ENCODE measurements at regions of chr17 and their contacts with region 1.

Region 1: GRCh38 chr17:50689251-50689650 is 18.5 kb downstream of the ANKRD40 start:
- DNase-seq: no peak
- ATAC-seq: no peak
- H3K4me3 ChIP-seq: no peak overlapping the region
- H3K27ac ChIP-seq: peak overlapping the region in 1 of 3 donors; percentile 24
- H3K4me1 ChIP-seq: peaks cover 5 to 93% (median 53%) of the 10 kb centered on the region in 4 donors
- H3K27me3 ChIP-seq: no peaks in the 10 kb centered on the region
- CTCF ChIP-seq: no peak
- POLR2A ChIP-seq: no peak

Region 2: DNA sequence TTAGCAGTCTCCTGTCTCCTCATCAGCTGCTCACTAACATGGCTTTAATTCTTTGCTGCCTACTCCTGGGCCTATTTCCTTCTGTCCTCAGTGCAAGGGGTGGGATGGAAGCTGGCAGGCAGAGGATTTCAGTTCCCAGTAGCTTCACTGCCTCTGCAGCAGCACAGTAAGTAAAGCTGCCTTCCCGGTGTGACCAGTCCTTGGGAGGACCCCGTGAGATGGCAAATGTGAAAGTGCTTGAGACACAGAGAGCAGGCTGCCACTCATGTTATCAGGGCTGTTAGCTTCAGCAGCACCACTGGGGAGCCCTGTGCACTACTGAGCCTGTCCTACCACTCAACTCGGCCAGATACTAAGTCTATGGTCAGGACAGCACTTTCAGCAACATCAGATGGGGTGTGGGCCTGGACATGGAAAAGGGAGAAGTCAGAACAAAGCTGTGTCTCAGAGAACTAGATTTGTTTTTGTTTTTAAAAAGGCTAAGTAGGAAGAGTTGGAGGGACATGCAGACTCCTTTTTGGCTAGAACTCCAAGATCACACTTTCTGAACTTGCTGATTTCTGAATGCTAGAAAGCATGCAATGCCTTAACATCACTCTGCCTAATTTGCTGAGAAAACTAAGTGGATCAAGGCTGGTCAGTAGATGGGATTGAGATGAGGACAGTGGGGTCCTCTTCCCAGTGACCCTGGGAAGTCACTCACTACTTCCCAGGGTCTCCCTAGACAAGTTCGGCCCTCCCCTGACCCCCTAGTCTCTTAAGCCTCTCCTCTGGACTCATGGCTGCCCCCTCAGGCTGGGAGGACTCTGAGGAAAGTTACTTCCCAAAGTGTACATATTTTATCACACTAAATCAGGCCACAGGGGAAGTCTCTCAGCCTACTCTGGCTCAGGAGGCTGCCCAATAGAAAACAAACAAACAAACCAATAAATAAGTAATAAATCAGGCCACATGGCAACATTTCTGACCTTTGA is 262.1 kb before region 1 on chr17:
- intact Hi-C with region 1: no loop called
- DNase-seq: peak in 1 of 3 donors; percentile 26
- ATAC-seq: peak; percentile 28 to 50 (median 41)
- H3K4me3 ChIP-seq: peak overlapping the region; percentile 71 to 87 (median 78)
- H3K27ac ChIP-seq: peak overlapping the region; percentile 62 to 71 (median 62)
- H3K4me1 ChIP-seq: peaks cover 0 to 37% (median 18%) of the 10 kb centered on the region in 4 donors
- H3K27me3 ChIP-seq: no peaks in the 10 kb centered on the region
- CTCF ChIP-seq: peak in 3 of 4 donors; percentile 15 to 22 (median 19)
- POLR2A ChIP-seq: peak; percentile 16

Region 3: DNA sequence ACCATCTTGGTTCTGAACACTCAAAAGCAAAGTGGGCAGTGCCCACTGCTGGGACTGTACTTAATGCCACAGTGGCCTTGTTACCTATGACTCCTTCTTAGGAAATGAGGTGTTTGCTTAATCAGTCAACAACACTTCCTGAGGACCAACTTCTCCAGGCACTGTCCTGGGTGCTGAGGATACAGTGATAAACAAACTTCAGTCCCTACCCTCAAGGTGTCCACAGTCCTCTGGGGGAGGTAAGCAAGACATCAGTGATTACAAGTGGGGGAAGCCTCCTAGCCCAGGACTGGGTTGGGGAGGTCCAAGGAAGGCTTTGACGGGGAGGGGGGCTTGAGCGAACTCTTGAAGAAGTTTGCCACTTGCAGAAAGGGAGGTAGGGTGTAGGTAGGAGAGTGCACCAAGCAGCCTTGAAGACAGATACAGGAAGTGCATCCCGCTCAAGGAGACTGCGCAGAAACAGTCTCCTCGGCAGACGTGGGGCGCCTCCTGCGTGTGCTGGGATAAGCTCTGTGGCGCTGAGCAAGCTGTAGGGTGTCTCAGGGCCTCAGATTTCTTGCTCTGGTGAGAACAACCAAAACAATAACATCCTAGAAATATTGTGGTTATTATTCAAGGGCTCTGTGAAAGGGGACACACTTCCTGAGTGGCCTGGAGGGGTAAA is 57.2 kb before region 1 on chr17:
- intact Hi-C with region 1: loop called (anchors 2 to 5 kb)
- DNase-seq: peak in 2 of 3 donors; percentile 3 to 31
- ATAC-seq: no peak
- H3K4me3 ChIP-seq: no peak overlapping the region
- H3K27ac ChIP-seq: no peak overlapping the region
- H3K4me1 ChIP-seq: peaks cover 0 to 28% (median 10%) of the 10 kb centered on the region in 4 donors
- H3K27me3 ChIP-seq: no peaks in the 10 kb centered on the region
- CTCF ChIP-seq: no peak
- POLR2A ChIP-seq: no peak

Region 4: GRCh38 chr17:50737118-50737698 is 48.0 kb after region 1 on chr17:
- intact Hi-C with region 1: no loop called
- DNase-seq: no peak
- ATAC-seq: no peak
- H3K4me3 ChIP-seq: no peak overlapping the region
- H3K27ac ChIP-seq: no peak overlapping the region
- H3K4me1 ChIP-seq: peaks cover 0 to under 1% (median 0%) of the 10 kb centered on the region in 4 donors
- H3K27me3 ChIP-seq: no peaks in the 10 kb centered on the region
- CTCF ChIP-seq: no peak
- POLR2A ChIP-seq: no peak